Activated CD4-positive, alpha-beta T cell treated with anti-CD3 and anti-CD28 coated beads, Interleukin-2, amount 10 ng/mL, durations not matched to agents 7 days and 5 days (primary cell): ENCODE measurements at regions of chr2 and their contacts with region 1.

Region 1: GRCh38 chr2:232292395-232293154 is 86.0 kb upstream of the ALPP start:
- DNase-seq: peak; percentile 66
- H3K4me3 Mint-ChIP-seq: no peak overlapping the region
- H3K27ac Mint-ChIP-seq: peak overlapping the region; percentile 72
- H3K4me1 Mint-ChIP-seq: peaks cover 15% of the 10 kb centered on the region
- H3K27me3 Mint-ChIP-seq: no peaks in the 10 kb centered on the region

Region 2: DNA sequence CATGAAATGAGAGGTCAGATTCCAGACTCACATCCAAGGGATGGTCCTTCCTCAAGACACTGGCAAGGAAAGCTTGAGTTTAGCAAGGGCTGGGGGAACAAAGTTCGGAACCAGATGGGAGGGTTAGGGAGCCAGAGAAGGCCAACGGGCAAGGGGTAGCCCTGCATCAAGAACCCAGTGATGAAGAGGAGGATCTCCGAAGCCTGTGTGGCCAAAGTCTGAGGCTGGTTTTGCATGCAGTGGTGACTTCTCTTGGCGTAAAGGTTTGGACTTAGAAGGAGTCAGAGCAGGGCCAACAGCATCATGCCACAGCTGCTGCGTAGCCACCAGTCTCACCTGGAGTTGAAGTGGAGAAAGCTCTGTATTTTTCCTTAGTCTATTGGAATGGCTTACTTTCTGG is 37.5 kb before region 1 on chr2:
- CTCF ChIA-PET with region 1: no interaction called
- POLR2A ChIA-PET with region 1: no interaction called
- DNase-seq: no peak
- H3K4me3 Mint-ChIP-seq: no peak overlapping the region
- H3K27ac Mint-ChIP-seq: no peak overlapping the region
- H3K4me1 Mint-ChIP-seq: no peaks in the 10 kb centered on the region
- H3K27me3 Mint-ChIP-seq: no peaks in the 10 kb centered on the region

Region 3: DNA sequence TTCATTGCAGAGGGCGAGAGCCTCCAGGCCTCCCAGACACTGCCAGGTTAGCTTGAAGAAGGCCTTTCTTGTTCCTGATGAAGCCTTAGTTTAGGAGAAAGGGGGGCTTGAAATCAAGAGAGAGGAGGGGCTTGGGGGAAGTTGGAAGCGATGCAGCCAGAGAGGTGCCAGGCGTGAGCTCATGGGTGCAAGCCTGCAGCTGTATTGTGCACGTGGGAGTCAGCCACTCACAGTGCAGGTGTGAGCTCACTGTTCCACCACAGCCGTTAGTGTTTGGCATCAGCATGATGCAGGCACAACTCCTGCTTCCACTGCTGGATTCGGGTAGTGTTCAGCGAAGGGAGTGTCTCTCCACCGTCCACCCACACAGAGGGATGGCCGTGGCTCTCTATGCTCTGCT is 17.5 kb after region 1 on chr2:
- CTCF ChIA-PET with region 1: interaction called, 19 read pairs
- POLR2A ChIA-PET with region 1: no interaction called
- DNase-seq: peak; percentile 46
- H3K4me3 Mint-ChIP-seq: peak overlapping the region; percentile 47
- H3K27ac Mint-ChIP-seq: peak overlapping the region; percentile 95
- H3K4me1 Mint-ChIP-seq: peaks cover 74% of the 10 kb centered on the region
- H3K27me3 Mint-ChIP-seq: no peaks in the 10 kb centered on the region

Region 4: GRCh38 chr2:232315049-232315922 is 22.7 kb after region 1 on chr2:
- CTCF ChIA-PET with region 1: interaction called, 19 read pairs
- POLR2A ChIA-PET with region 1: no interaction called
- DNase-seq: peak; percentile 89
- H3K4me3 Mint-ChIP-seq: peak overlapping the region; percentile 58
- H3K27ac Mint-ChIP-seq: peak overlapping the region; percentile 94
- H3K4me1 Mint-ChIP-seq: peaks cover 90% of the 10 kb centered on the region
- H3K27me3 Mint-ChIP-seq: no peaks in the 10 kb centered on the region

Region 5: GRCh38 chr2:232348936-232349335 is 56.4 kb after region 1 on chr2:
- CTCF ChIA-PET with region 1: no interaction called
- POLR2A ChIA-PET with region 1: no interaction called
- DNase-seq: peak; percentile 41
- H3K4me3 Mint-ChIP-seq: no peak overlapping the region
- H3K27ac Mint-ChIP-seq: no peak overlapping the region
- H3K4me1 Mint-ChIP-seq: peaks cover 7% of the 10 kb centered on the region
- H3K27me3 Mint-ChIP-seq: peaks cover 39% of the 10 kb centered on the region